ENCODE measurements at regions of chr4 and their contacts with region 1.

Region 1: DNA sequence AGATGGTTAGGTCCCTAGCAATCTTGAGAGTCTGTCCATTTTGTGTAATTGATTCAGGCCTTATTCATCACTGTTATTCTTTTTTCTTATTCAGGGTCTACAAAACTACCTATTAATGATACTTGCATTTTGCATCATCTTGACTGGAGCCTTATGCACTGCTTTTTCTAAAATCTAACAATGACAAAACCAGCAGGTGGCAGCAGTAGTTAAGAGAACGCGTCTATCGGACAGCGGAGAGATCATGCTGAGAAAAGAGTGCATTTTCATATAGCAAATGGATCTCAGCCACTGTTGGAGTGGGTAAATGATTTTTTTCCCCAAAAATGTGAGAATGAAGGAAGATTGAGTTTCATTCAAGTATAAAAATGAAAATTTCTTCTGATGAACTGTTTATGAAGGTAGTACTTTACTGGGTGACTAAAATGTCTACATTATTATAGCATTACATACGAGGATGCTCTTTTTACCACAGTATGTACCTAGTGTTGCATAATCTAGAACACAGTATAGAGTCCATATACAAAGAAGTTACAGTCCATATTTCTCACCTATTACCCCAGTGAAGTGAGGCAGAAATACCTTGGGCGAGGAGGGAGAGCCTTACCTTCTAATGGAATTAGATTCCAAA is 43.2 kb downstream of the TMEM144 start:
- DNase-seq: peak in 2 of 4 experiments; percentile 38 to 69
- ATAC-seq: peak; percentile 94
- H3K4me3 ChIP-seq: no peak overlapping the region
- H3K27ac ChIP-seq: no peak overlapping the region
- H3K4me1 ChIP-seq: no peaks in the 10 kb centered on the region; a peak in 1 of 5 replicates
- H3K27me3 ChIP-seq: no peaks in the 10 kb centered on the region
- CTCF ChIP-seq: peak; percentile 56 to 70 (median 63); a peak in 5 of 6 replicates
- EP300 ChIP-seq: no peak
- POLR2A ChIP-seq: no peak
- RAD21 ChIP-seq: peak; percentile 58 to 66

Region 2: GRCh38 chr4:157992038-157992705 is 261.3 kb before region 1 on chr4:
- CTCF ChIA-PET with region 1: interaction called, 11 read pairs
- POLR2A ChIA-PET with region 1: no interaction called
- in situ Hi-C with region 1: loop called (anchors 25 kb)
- intact Hi-C with region 1: loop called (anchors 1 kb)
- DNase-seq: peak; percentile 10 to 57 (median 12)
- ATAC-seq: no peak
- H3K4me3 ChIP-seq: no peak overlapping the region
- H3K27ac ChIP-seq: no peak overlapping the region
- H3K4me1 ChIP-seq: no peaks in the 10 kb centered on the region
- H3K27me3 ChIP-seq: no peaks in the 10 kb centered on the region
- CTCF ChIP-seq: peak; percentile 28 to 67 (median 37); a peak in 3 of 6 replicates
- EP300 ChIP-seq: no peak
- POLR2A ChIP-seq: no peak
- RAD21 ChIP-seq: peak; percentile 77 to 83

Region 3: DNA sequence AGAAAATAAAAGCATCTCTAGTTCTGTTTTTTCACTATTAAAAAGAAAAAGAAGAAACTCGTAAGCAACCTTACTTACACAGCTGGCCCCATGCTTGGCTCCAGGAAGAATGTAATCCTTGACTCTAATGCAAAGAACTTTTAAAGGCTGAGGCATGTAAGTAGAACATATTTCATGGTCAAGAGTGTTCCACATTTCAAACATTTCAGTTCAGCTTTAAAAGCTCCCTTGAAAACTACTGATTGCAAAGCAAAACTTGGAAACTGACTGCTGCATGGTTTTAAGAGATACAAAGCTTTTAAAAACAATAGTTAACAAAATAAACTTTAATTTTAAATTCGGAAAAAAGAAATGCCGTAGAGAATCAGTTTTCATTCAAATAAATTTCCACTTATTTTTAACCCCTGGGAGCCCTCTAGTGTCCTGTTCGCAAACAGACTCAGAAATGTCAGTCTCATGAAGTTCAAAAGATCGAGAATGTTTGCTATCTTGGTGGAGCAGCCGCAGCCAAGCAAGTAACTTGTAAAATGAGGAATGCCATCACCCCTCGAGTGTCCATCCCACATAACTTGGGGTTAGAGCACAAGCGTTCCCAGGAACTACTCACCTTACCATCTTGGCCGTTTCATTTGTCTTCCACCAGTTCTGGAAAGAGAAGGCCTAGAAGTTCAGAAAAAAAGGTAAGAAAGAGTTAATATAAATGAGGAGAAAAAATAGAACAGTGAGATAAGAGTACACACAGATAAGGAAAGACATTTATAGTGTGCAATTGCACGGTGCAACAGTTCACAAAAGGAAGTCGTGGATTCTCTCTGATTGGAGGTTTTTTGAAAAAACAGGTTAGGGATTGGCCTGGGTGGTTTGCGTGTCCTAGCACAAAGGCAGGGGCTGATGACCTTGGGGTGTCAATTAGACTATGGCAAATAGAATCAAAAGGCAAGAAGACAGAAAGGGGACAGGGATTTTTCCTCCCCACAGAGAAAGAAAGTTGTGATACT is 80.9 kb before region 1 on chr4 and contains the start of gene GASK1B:
- CTCF ChIA-PET with region 1: no interaction called
- POLR2A ChIA-PET with region 1: no interaction called
- in situ Hi-C with region 1: no loop called
- intact Hi-C with region 1: loop called (anchors 5 kb)
- DNase-seq: peak in 3 of 4 experiments; percentile 14 to 61 (median 42)
- ATAC-seq: peak; percentile 81
- H3K4me3 ChIP-seq: no peak within 1 kb of the TSS
- H3K27ac ChIP-seq: no peak within 1 kb of the TSS
- H3K4me1 ChIP-seq: peaks cover 5 to 7% of the 10 kb centered on the region in 2 experiments; a peak in 4 of 5 replicates
- H3K27me3 ChIP-seq: 0 out of 5 replicates have a peak, but pooled peaks cover 0 to 5% of the 10 kb centered on the region in 2 experiments
- CTCF ChIP-seq: peak; percentile 44 to 69 (median 64); a peak in 5 of 6 replicates
- EP300 ChIP-seq: no peak
- POLR2A ChIP-seq: no peak
- RAD21 ChIP-seq: peak; percentile 64 to 70
- polyA plus RNA-seq, gene GASK1B: 0.15 to 0.32 TPM

Region 4: GRCh38 chr4:158193171-158193749 is 60.2 kb before region 1 on chr4:
- CTCF ChIA-PET with region 1: interaction called, 16 read pairs
- POLR2A ChIA-PET with region 1: no interaction called
- in situ Hi-C with region 1: loop called (anchors 5 kb)
- intact Hi-C with region 1: loop called (anchors 1 kb)
- DNase-seq: peak; percentile 31 to 43 (median 42)
- ATAC-seq: peak; percentile 82
- H3K4me3 ChIP-seq: no peak overlapping the region
- H3K27ac ChIP-seq: no peak overlapping the region
- H3K4me1 ChIP-seq: no peaks in the 10 kb centered on the region
- H3K27me3 ChIP-seq: no peaks in the 10 kb centered on the region
- CTCF ChIP-seq: peak; percentile 49 to 71 (median 51); a peak in 5 of 6 replicates
- EP300 ChIP-seq: no peak
- POLR2A ChIP-seq: no peak
- RAD21 ChIP-seq: peak; percentile 48 to 69

Region 5: DNA sequence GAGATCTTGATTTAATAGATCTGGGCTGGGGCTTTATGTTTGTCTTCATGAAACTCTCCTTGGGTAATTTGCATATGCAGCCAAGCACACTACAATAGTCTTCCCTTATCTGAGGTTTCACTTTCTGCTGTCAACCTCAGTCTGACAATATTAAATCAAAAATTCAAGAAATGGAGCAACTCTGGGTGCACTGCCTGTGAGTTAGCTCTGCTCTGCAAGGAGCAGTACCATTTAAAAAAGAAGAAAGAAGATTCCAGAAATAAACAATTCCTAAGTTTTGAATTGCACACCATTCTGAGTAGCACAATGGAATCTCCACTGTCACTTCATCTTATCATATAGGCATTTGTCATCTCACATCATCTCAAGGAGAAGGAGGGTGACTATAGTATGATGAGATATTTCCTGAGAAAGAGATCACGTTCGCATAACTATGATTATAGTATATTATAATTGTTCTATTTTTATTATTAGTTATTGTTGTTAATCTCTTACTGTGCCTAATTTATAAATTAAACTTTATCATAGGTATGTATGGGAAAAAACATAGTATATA is 524.8 kb after region 1 on chr4:
- CTCF ChIA-PET with region 1: no interaction called
- POLR2A ChIA-PET with region 1: no interaction called
- in situ Hi-C with region 1: no loop called
- intact Hi-C with region 1: no loop called
- DNase-seq: no peak
- ATAC-seq: no peak; the same call in 2 of the 3 replicates
- H3K4me3 ChIP-seq: no peak overlapping the region
- H3K27ac ChIP-seq: no peak overlapping the region
- H3K4me1 ChIP-seq: peaks cover 6 to 25% of the 10 kb centered on the region in 2 experiments
- H3K27me3 ChIP-seq: no peaks in the 10 kb centered on the region
- CTCF ChIP-seq: no peak
- EP300 ChIP-seq: no peak
- POLR2A ChIP-seq: no peak
- RAD21 ChIP-seq: no peak